Sciatic nerve (tissue), 2 donors: ENCODE measurements at regions of chr6 and their contacts with region 1.

Region 1: DNA sequence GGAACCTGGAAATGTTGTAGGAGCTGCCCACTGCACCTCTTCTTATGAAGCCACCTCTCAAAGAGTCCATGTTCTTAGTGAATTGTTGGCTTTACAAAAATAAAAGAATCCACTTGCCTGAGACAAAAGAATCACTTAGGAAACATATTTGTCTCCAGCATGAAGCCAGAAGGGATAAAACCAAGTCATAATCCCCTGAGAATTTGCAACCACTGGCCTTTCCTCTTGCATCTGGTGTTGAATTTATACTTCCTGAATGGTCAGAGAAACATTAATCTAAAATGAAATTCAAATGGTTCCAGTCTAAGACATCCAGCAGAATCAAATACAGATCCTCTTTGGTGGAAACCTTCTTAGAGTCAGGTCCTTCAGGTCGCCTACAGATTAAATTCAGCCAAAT is 192.5 kb upstream of the ECI2 start:
- DNase-seq: no peak
- ATAC-seq: no peak

Region 2: GRCh38 chr6:3612341-3613041 is 715.4 kb before region 1 on chr6:
- intact Hi-C with region 1: no loop called
- DNase-seq: no peak
- ATAC-seq: no peak

Region 3: DNA sequence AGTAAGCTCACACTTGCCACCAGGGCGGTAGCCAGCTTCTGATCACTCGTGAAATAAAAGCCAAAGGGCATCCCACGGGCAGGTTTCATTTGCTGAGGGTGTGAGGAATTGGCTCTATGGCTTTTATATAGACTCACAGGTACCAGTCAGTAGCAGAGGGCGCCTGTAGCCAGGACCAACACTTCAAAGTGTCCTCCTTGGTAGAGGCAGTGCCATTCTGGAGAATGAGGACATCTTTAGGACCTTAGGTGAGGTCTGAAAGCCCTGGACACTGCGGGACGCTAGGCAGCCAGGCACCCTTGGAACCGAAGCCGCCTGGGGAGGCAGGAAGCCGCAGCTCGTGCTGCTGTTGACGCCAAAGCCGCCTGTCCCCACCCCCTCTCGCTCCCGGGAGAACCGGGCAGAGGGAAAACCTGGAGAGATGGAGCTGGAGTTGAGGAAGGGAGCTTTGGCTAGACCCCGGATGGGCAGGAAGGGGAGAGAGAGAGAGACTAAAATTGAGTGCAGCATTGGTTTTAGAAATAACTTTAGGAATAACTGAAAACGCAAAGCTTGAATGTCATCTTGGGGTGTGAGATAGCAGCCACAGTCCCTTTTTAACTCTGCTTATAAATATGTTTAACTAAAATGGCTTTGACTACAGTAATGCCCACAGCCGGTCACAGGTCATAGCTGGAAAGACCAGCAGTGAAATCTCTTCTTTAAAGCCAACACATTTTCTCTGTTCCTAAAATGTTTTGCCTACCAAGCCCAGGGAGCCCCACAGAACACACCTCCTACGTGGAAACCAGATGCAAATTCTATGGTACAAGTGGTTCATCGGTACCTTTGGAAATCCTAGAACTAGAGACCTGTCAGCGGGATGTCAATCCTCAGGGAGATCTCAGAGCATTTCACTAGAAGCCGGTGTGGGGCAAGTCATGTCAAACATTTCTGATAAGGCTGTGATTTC is 319.8 kb after region 1 on chr6:
- intact Hi-C with region 1: loop called (anchors 5 kb)
- DNase-seq: peak; percentile 77
- ATAC-seq: peak; percentile 84